Upper lobe of right lung (tissue), 1 donor: ENCODE measurements at regions of chr5 and their contacts with region 1.

Region 1: GRCh38 chr5:96763026-96763425 is 44.7 kb downstream of the ERAP1 start:
- DNase-seq: no peak
- ATAC-seq: no peak
- H3K4me3 ChIP-seq: no peak overlapping the region
- H3K27ac ChIP-seq: no peak overlapping the region
- H3K4me1 ChIP-seq: no peaks in the 10 kb centered on the region
- H3K27me3 ChIP-seq: no peaks in the 10 kb centered on the region
- CTCF ChIP-seq: no peak

Region 2: GRCh38 chr5:97162045-97162444 is 399.0 kb after region 1 on chr5:
- intact Hi-C with region 1: loop called (anchors 10 kb)
- DNase-seq: no peak
- ATAC-seq: peak; percentile 84
- H3K4me3 ChIP-seq: no peak overlapping the region
- H3K27ac ChIP-seq: no peak overlapping the region
- H3K4me1 ChIP-seq: no peaks in the 10 kb centered on the region
- H3K27me3 ChIP-seq: no peaks in the 10 kb centered on the region
- CTCF ChIP-seq: peak; percentile 92